ENCODE measurements at regions of chr16 and their contacts with region 1.

Region 1: DNA sequence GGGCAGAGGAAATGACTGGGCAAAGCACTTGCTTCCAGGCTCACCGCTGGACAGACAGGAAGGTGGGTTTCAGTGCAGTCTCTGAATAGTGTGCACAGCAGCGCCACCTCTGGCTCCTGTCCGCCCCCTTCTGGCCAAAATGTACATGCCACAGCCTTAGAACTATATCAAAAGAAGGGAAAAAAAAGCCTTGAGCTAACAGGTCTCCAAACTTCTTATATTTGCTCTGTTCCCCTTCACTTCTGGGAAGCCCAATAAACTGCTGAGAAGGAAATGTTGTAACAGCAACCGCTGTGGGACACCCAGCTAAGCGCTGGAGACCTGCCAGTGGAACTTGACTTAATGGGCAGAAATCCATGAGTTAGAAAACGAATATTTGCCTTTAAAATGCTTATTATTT is 17.5 kb downstream of the COG7 start:
- DNase-seq: peak; percentile 78
- H3K4me3 ChIP-seq: no peak overlapping the region
- H3K27ac ChIP-seq: no peak overlapping the region
- H3K4me1 ChIP-seq: no peaks in the 10 kb centered on the region
- CTCF ChIP-seq: peak; percentile 99

Region 2: GRCh38 chr16:23060458-23061320 is 374.8 kb before region 1 on chr16:
- CTCF ChIA-PET with region 1: no interaction called
- POLR2A ChIA-PET with region 1: no interaction called
- intact Hi-C with region 1: loop called (anchors 10 kb)
- DNase-seq: peak; percentile 69
- H3K4me3 ChIP-seq: no peak overlapping the region
- H3K27ac ChIP-seq: no peak overlapping the region
- H3K4me1 ChIP-seq: no peaks in the 10 kb centered on the region
- CTCF ChIP-seq: peak; percentile 93

Region 3: DNA sequence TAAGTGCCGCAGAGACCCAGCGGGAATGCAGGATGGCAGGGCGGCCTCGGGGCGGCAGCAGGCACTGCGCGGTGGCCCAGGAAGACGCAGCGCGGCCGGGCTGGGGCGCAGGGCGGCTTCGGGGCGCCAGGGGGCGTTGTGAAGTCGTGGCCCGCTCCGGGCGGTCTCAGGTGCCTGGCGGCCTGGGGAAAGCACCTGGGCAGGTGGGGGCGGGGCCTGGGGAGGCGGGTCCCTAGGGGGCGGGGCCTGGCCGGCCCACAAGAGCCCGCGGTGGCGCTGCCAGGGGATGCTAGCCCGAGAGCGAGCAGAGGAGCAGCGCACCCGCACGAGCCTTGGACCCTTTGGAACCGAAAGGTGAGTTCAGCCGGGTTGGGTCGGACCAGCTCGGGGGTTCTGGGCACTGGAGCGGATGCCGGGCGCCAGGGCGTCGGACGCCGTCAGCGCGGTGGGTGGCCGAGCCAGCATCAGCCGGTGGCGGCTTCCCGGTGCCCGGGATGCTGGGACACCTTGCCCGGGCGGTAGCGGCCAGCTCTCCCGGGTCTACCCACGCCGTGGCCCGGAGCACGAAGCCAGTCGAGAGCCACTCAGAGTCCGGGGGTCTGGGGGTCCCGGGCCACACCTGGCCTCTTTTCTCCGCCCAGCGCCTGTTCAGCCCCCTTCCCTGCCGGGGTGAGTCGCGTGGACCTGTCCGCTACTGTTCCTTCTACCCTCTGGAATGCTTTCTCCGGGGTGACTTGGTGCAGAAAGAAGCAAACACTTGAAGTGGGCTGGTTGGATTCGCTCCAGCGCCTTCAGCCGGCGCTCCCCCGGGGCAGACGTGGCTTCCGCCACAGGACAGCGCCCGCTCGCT is 252.8 kb before region 1 on chr16 and contains the start of gene SCNN1G:
- CTCF ChIA-PET with region 1: interaction called, 4 read pairs
- POLR2A ChIA-PET with region 1: interaction called, 5 read pairs
- intact Hi-C with region 1: loop called (anchors 1 kb)
- DNase-seq: peak; percentile 81
- H3K4me3 ChIP-seq: no peak within 1 kb of the TSS
- H3K27ac ChIP-seq: no peak within 1 kb of the TSS
- H3K4me1 ChIP-seq: peaks cover 4% of the 10 kb centered on the region
- CTCF ChIP-seq: peak; percentile 87
- total RNA-seq, gene SCNN1G: not detected in 2 replicates

Region 4: GRCh38 chr16:23296994-23297393 is 138.5 kb before region 1 on chr16:
- CTCF ChIA-PET with region 1: no interaction called
- POLR2A ChIA-PET with region 1: no interaction called
- intact Hi-C with region 1: loop called (anchors 2 kb)
- DNase-seq: peak; percentile 58
- H3K4me3 ChIP-seq: no peak overlapping the region
- H3K27ac ChIP-seq: no peak overlapping the region
- H3K4me1 ChIP-seq: peaks cover 4% of the 10 kb centered on the region
- CTCF ChIP-seq: peak; percentile 79

Region 5: DNA sequence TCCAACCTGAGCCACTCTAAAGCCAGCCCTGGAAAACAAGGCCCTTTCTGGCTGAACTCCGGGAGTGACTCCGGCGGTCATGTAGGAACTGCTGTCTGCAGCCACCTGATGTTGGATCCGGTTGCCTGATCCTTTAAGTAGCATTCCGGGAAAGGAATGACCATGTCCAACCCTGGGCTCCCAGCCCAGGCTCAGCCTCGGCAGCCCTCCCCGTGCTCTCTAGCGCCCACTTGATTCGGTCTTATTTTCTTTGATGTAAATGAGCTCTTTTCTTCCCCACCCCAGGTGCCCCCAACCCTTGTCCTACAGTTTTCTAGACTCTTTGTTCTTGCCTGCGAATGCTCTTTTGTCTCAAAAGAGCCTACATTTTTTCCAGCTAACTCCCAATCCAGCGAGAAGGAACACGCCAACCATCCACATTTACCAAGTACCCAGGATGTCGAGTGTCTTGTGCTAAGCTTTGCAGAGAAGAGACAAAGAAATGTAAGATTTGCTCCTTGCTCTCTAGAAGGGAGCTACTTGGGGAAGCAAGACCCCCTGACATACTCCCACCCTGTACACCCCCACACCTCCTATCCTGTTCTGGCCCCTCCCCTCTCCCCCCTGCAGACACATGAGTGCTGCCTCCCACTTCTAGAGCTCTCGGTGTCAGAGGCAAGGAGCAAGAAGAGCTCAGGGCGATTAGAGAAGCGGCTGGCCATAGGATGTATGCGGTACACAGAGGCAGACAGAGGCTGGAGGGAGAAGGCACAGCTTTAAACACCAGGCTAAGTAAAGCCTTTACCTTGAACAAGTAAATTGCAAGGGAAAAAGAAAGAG is 36.3 kb before region 1 on chr16:
- CTCF ChIA-PET with region 1: no interaction called
- POLR2A ChIA-PET with region 1: no interaction called
- intact Hi-C with region 1: no loop called
- DNase-seq: no peak
- H3K4me3 ChIP-seq: no peak overlapping the region
- H3K27ac ChIP-seq: no peak overlapping the region
- H3K4me1 ChIP-seq: peaks cover 12% of the 10 kb centered on the region
- CTCF ChIP-seq: no peak

Measured in OCI-LY7 (cell line).